Gastrocnemius medialis (tissue), 4 donors: ENCODE measurements at regions of chr6 and their contacts with region 1.

Region 1: GRCh38 chr6:25889877-25890853 is 16.1 kb upstream of the SLC17A3 start:
- DNase-seq: no peak
- ATAC-seq: no peak
- H3K4me3 ChIP-seq: no peak overlapping the region
- H3K27ac ChIP-seq: no peak overlapping the region
- H3K4me1 ChIP-seq: no peaks in the 10 kb centered on the region
- H3K27me3 ChIP-seq: no peaks in the 10 kb centered on the region
- CTCF ChIP-seq: peak in 3 of 5 experiments; percentile 19 to 31 (median 24)
- POLR2A ChIP-seq: no peak

Region 2: GRCh38 chr6:25223490-25223991 is 666.6 kb before region 1 on chr6:
- in situ Hi-C with region 1: no loop called
- intact Hi-C with region 1: loop called (anchors 5 kb)
- DNase-seq: peak in 1 of 2 donors; percentile 21
- ATAC-seq: peak in 1 of 2 donors; percentile 58
- H3K4me3 ChIP-seq: peak overlapping the region in 3 of 4 donors; percentile 6 to 34 (median 32)
- H3K27ac ChIP-seq: no peak overlapping the region
- H3K4me1 ChIP-seq: no peaks in the 10 kb centered on the region
- H3K27me3 ChIP-seq: no peaks in the 10 kb centered on the region
- CTCF ChIP-seq: peak; percentile 47 to 78 (median 56)
- POLR2A ChIP-seq: no peak

Region 3: GRCh38 chr6:25788305-25788922 is 101.8 kb before region 1 on chr6:
- in situ Hi-C with region 1: no loop called
- intact Hi-C with region 1: no loop called
- DNase-seq: no peak
- ATAC-seq: peak in 1 of 2 donors; percentile 49
- H3K4me3 ChIP-seq: no peak overlapping the region
- H3K27ac ChIP-seq: no peak overlapping the region
- H3K4me1 ChIP-seq: no peaks in the 10 kb centered on the region
- H3K27me3 ChIP-seq: no peaks in the 10 kb centered on the region
- CTCF ChIP-seq: peak in 3 of 5 experiments; percentile 23 to 28 (median 24)
- POLR2A ChIP-seq: no peak

Region 4: GRCh38 chr6:25835442-25836283 is 54.5 kb before region 1 on chr6:
- in situ Hi-C with region 1: no loop called
- intact Hi-C with region 1: no loop called
- DNase-seq: no peak
- ATAC-seq: no peak
- H3K4me3 ChIP-seq: no peak overlapping the region
- H3K27ac ChIP-seq: no peak overlapping the region
- H3K4me1 ChIP-seq: no peaks in the 10 kb centered on the region
- H3K27me3 ChIP-seq: no peaks in the 10 kb centered on the region
- CTCF ChIP-seq: no peak
- POLR2A ChIP-seq: no peak